ENCODE measurements at regions of chr2 and their contacts with region 1.

Region 1: GRCh38 chr2:164560181-164560792 is 61.0 kb downstream of the GRB14 start:
- DNase-seq: no peak
- H3K4me3 ChIP-seq: no peak overlapping the region
- H3K27ac ChIP-seq: no peak overlapping the region
- H3K4me1 ChIP-seq: peaks cover 4% of the 10 kb centered on the region
- H3K27me3 ChIP-seq: no peaks in the 10 kb centered on the region
- CTCF ChIP-seq: peak; percentile 52 to 79 (median 70)
- EP300 ChIP-seq: no peak
- POLR2A ChIP-seq: no peak

Region 2: GRCh38 chr2:164620873-164621626 is 60.8 kb after region 1 on chr2 and contains the start of gene GRB14:
- intact Hi-C with region 1: no loop called
- DNase-seq: peak; percentile 41 to 62 (median 50)
- H3K4me3 ChIP-seq: peak within 1 kb of the TSS; percentile 39
- H3K27ac ChIP-seq: no peak within 1 kb of the TSS
- H3K4me1 ChIP-seq: no peaks in the 10 kb centered on the region
- H3K27me3 ChIP-seq: no peaks in the 10 kb centered on the region
- CTCF ChIP-seq: no peak
- EP300 ChIP-seq: no peak
- POLR2A ChIP-seq: no peak
- total RNA-seq, gene GRB14: 4.5 to 33.6 (median 10.0) TPM

Region 3: GRCh38 chr2:164706522-164706921 is 146.2 kb after region 1 on chr2:
- intact Hi-C with region 1: loop called in 3 of 4 experiments (anchors 5 to 10 kb)
- DNase-seq: no peak
- H3K4me3 ChIP-seq: no peak overlapping the region
- H3K27ac ChIP-seq: no peak overlapping the region
- H3K4me1 ChIP-seq: no peaks in the 10 kb centered on the region
- H3K27me3 ChIP-seq: no peaks in the 10 kb centered on the region
- CTCF ChIP-seq: no peak
- EP300 ChIP-seq: no peak
- POLR2A ChIP-seq: no peak

Region 4: GRCh38 chr2:164717000-164717803 is 156.9 kb after region 1 on chr2:
- intact Hi-C with region 1: loop called in 2 of 4 experiments (anchors 5 to 10 kb)
- DNase-seq: no peak
- H3K4me3 ChIP-seq: no peak overlapping the region
- H3K27ac ChIP-seq: no peak overlapping the region
- H3K4me1 ChIP-seq: no peaks in the 10 kb centered on the region
- H3K27me3 ChIP-seq: no peaks in the 10 kb centered on the region
- CTCF ChIP-seq: peak in 2 of 3 donors; percentile 31 to 42
- EP300 ChIP-seq: no peak
- POLR2A ChIP-seq: no peak

Measured in ovary (tissue), 10 donors.